Activated naive CD4-positive, alpha-beta T cell treated with anti-CD3 and anti-CD28 coated beads for 36 hours (primary cell): ENCODE measurements at regions of chr15 and their contacts with region 1.

Region 1: GRCh38 chr15:56371495-56372147 is 6.4 kb downstream of the TEX9 start:
- DNase-seq: no peak
- H3K4me3 Mint-ChIP-seq: no peak overlapping the region
- H3K27ac Mint-ChIP-seq: no peak overlapping the region
- H3K4me1 Mint-ChIP-seq: peaks cover 9% of the 10 kb centered on the region
- H3K27me3 Mint-ChIP-seq: peaks cover 28% of the 10 kb centered on the region

Region 2: GRCh38 chr15:56356616-56357015 is 15.0 kb before region 1 on chr15:
- CTCF ChIA-PET with region 1: no interaction called
- intact Hi-C with region 1: loop called (anchors 2 kb)
- DNase-seq: no peak
- H3K4me3 Mint-ChIP-seq: no peak overlapping the region
- H3K27ac Mint-ChIP-seq: no peak overlapping the region
- H3K4me1 Mint-ChIP-seq: no peaks in the 10 kb centered on the region
- H3K27me3 Mint-ChIP-seq: peaks cover 3% of the 10 kb centered on the region

Region 3: GRCh38 chr15:56390739-56391267 is 19.2 kb after region 1 on chr15:
- CTCF ChIA-PET with region 1: no interaction called
- intact Hi-C with region 1: no loop called
- DNase-seq: no peak
- H3K4me3 Mint-ChIP-seq: no peak overlapping the region
- H3K27ac Mint-ChIP-seq: no peak overlapping the region
- H3K4me1 Mint-ChIP-seq: peaks cover 3% of the 10 kb centered on the region
- H3K27me3 Mint-ChIP-seq: peaks cover 2% of the 10 kb centered on the region

Region 4: DNA sequence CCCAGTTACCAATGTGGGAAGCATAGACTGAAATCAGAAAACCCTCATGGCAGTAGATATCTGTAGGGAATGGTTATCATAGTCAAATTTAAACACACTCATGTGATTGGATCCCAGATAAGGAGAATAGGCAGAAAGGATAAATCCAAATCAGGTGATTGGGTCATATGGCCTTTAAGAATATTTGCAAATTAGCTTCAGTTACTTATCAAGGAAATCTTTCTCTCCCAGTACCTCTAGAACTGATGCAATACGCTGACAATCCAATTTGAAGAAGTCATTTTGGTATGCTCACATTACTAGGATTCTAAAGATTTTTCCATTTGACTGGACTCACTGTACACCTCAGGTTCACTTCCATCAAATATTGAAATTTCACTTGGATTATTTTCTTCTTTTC is 181.0 kb after region 1 on chr15:
- CTCF ChIA-PET with region 1: no interaction called
- intact Hi-C with region 1: no loop called
- DNase-seq: no peak
- H3K4me3 Mint-ChIP-seq: no peak overlapping the region
- H3K27ac Mint-ChIP-seq: no peak overlapping the region
- H3K4me1 Mint-ChIP-seq: no peaks in the 10 kb centered on the region
- H3K27me3 Mint-ChIP-seq: peaks cover 7% of the 10 kb centered on the region